Sigmoid colon (tissue), 7 donors: ENCODE measurements at regions of chr11 and their contacts with region 1.

Region 1: GRCh38 chr11:93652161-93652597 is 9.3 kb upstream of the CEP295 start:
- DNase-seq: no peak
- H3K4me3 ChIP-seq: no peak overlapping the region
- H3K27ac ChIP-seq: no peak overlapping the region
- H3K4me1 ChIP-seq: no peaks in the 10 kb centered on the region
- H3K27me3 ChIP-seq: no peaks in the 10 kb centered on the region
- CTCF ChIP-seq: peak in 3 of 4 experiments; percentile 48 to 80 (median 55)
- EP300 ChIP-seq: no peak
- POLR2A ChIP-seq: no peak

Region 2: GRCh38 chr11:92941676-92942571 is 710.3 kb before region 1 on chr11:
- intact Hi-C with region 1: loop called (anchors 10 kb)
- DNase-seq: no peak
- H3K4me3 ChIP-seq: no peak overlapping the region
- H3K27ac ChIP-seq: no peak overlapping the region
- H3K4me1 ChIP-seq: no peaks in the 10 kb centered on the region
- H3K27me3 ChIP-seq: no peaks in the 10 kb centered on the region
- CTCF ChIP-seq: peak in 3 of 4 experiments; percentile 33 to 46 (median 39)
- EP300 ChIP-seq: no peak
- POLR2A ChIP-seq: no peak

Region 3: GRCh38 chr11:93432247-93432646 is 219.9 kb before region 1 on chr11:
- intact Hi-C with region 1: no loop called
- DNase-seq: no peak
- H3K4me3 ChIP-seq: no peak overlapping the region
- H3K27ac ChIP-seq: no peak overlapping the region
- H3K4me1 ChIP-seq: no peaks in the 10 kb centered on the region
- H3K27me3 ChIP-seq: no peaks in the 10 kb centered on the region
- CTCF ChIP-seq: no peak
- EP300 ChIP-seq: no peak
- POLR2A ChIP-seq: no peak

Region 4: GRCh38 chr11:93543292-93543977 is 108.7 kb before region 1 on chr11 and contains the start of gene SMCO4:
- intact Hi-C with region 1: loop called (anchors 2 kb)
- DNase-seq: peak; percentile 88
- H3K4me3 ChIP-seq: peak within 1 kb of the TSS; percentile 48 to 89 (median 72)
- H3K27ac ChIP-seq: peak within 1 kb of the TSS; percentile 75 to 89 (median 78)
- H3K4me1 ChIP-seq: peaks cover 2 to 14% (median 9%) of the 10 kb centered on the region in 4 donors
- H3K27me3 ChIP-seq: no peaks in the 10 kb centered on the region
- CTCF ChIP-seq: peak; percentile 25 to 63 (median 44)
- EP300 ChIP-seq: no peak
- POLR2A ChIP-seq: no peak
- total RNA-seq, gene SMCO4: 2.4 to 9.6 (median 6.1) TPM

Region 5: DNA sequence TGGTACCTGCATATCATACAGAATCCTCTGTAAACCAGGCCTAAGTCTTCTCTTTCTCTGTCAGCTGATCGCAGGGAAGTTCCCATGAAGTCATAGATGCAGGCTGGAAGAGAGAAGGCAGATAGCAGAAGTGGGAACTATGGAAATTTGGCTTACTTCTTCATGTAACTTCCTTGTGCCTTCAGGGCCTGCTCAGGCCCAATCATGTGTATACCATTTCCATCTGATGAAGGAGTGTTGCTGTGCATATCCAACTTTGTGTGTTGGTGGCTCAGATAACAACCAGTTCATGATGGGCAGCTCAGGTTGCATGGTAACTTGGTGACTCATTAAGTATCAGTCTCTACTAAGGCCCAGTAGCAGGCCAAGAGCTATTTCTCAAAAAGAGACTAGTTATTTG is 43.8 kb before region 1 on chr11:
- intact Hi-C with region 1: no loop called
- DNase-seq: no peak
- H3K4me3 ChIP-seq: no peak overlapping the region
- H3K27ac ChIP-seq: no peak overlapping the region
- H3K4me1 ChIP-seq: no peaks in the 10 kb centered on the region
- H3K27me3 ChIP-seq: no peaks in the 10 kb centered on the region
- CTCF ChIP-seq: no peak
- EP300 ChIP-seq: no peak
- POLR2A ChIP-seq: no peak

Region 6: DNA sequence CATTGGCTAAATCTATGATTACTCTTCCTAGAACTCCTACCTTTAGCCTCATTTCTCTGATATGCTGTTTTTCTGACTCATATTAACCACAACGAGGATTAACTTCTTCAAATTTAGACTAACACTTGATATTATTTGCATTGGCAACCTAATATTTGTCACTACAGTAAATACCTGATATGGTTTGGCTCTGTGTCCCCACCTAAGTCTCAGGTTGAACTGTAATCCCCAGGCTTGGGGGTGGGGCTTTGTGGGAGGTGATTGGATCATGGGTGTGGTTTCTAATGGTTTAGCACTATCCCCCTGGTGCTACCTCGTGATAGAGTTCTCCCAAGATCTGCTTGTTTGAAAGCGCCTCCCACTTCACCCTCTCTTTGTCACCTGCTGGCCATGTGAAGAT is 114.8 kb after region 1 on chr11:
- intact Hi-C with region 1: no loop called
- DNase-seq: no peak
- H3K4me3 ChIP-seq: no peak overlapping the region
- H3K27ac ChIP-seq: no peak overlapping the region
- H3K4me1 ChIP-seq: no peaks in the 10 kb centered on the region
- H3K27me3 ChIP-seq: no peaks in the 10 kb centered on the region
- CTCF ChIP-seq: no peak
- EP300 ChIP-seq: no peak
- POLR2A ChIP-seq: no peak